H1 (cell line): ENCODE measurements at regions of chr12 and their contacts with region 1.

Region 1: GRCh38 chr12:124527861-124528561 is 39.4 kb downstream of the NCOR2 start:
- DNase-seq: no peak
- H3K4me3 ChIP-seq: no peak overlapping the region
- H3K27ac ChIP-seq: no peak overlapping the region
- H3K4me1 ChIP-seq: peaks cover 0 to 14% (median 6%) of the 10 kb centered on the region in 4 experiments
- H3K27me3 ChIP-seq: no peaks in the 10 kb centered on the region
- CTCF ChIP-seq: peak; percentile 28 to 65 (median 61); a peak in 3 of 4 replicates
- EP300 ChIP-seq: no peak
- POLR2A ChIP-seq: no peak
- RAD21 ChIP-seq: peak; percentile 37 to 52; a peak in 3 of 4 replicates

Region 2: DNA sequence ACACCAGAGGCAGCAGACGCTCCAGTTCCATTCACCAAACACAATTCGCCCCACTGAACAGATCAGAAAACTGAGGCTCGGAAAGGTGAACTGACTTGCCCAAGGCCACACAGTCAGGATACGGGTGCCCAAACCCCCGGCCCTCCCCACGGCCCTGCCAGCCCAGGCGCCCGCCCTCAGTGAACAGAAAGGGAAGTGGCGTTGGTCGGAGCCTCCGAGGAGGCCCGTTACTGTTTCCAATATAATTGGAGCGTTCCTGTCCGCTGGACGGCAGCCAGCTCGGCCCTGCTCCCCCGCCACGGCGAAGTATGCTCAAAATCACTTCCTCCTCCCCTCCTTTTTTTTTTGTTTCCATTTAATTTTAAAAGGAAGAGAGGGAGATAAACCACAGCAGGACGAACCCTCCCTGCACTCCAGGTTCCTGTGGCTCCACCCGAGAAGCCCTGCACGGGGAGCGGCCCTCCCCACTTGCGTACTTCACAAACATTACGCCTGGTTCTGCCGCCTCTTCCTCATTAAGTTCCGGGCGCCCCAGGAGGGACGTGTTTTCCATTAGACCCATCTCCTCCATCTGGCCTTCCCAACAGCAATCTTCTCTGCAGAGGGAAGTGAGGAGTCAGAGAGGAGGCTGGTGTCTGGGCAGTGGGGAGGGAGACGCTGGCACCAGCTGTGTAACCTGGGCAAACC is 21.7 kb before region 1 on chr12:
- CTCF ChIA-PET with region 1: interaction called, 39 read pairs
- POLR2A ChIA-PET with region 1: interaction called, 3 read pairs
- DNase-seq: no peak
- H3K4me3 ChIP-seq: no peak overlapping the region
- H3K27ac ChIP-seq: no peak overlapping the region
- H3K4me1 ChIP-seq: peaks cover 3 to 79% (median 55%) of the 10 kb centered on the region in 4 experiments
- H3K27me3 ChIP-seq: no peaks in the 10 kb centered on the region
- CTCF ChIP-seq: no peak
- EP300 ChIP-seq: no peak
- POLR2A ChIP-seq: no peak
- RAD21 ChIP-seq: no peak; a peak in 1 of 4 replicates

Region 3: GRCh38 chr12:124538194-124539082 is 10.4 kb after region 1 on chr12:
- CTCF ChIA-PET with region 1: interaction called, 17 read pairs
- POLR2A ChIA-PET with region 1: no interaction called
- DNase-seq: no peak
- H3K4me3 ChIP-seq: no peak overlapping the region
- H3K27ac ChIP-seq: no peak overlapping the region
- H3K4me1 ChIP-seq: peaks cover 0 to 30% (median 13%) of the 10 kb centered on the region in 4 experiments; a peak in 6 of 7 replicates
- H3K27me3 ChIP-seq: no peaks in the 10 kb centered on the region
- CTCF ChIP-seq: no peak
- EP300 ChIP-seq: no peak
- POLR2A ChIP-seq: no peak
- RAD21 ChIP-seq: no peak

Region 4: DNA sequence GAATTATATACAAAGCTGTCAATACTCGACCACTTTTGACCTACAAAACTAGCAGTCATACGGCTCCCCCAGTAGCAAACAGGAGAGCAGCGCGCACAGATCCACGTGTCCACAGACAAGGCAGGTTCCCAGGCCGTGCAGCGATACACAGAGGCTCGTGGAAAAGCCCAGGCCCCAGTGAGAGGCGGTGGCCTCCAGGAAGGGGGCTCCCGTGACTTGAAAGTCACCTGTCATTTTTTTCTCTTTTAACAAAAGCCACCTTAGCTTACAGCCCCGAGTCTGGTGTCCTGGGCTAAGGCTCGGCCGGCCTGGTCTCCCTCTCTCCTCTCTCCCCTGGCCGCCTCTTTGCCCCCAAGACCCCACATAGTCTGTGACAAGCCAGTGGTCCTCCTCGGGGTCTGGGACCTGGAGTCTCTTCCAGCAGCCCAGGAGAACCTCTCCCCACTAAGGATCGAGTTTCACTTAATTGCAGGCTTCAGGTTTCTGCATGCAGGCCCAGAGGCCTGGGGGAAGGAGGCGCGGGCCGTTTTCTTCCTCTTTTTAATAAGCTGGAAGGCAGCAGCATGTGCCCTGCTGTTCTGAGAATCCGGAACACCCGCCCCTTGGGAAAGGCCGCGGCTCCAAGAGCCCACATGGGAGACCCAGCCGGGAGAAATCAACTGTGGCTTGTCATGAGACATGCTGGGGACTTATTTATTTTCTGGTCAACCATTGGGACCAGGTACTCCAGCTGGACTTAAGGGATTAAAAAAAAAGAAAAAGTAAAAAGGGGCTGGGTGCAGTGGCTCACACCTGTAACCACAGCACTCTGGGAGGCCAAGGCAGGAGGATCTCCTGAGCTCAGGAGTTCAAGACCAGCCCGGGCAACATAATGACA is 23.5 kb after region 1 on chr12:
- CTCF ChIA-PET with region 1: interaction called, 11 read pairs
- POLR2A ChIA-PET with region 1: interaction called, 4 read pairs
- DNase-seq: no peak
- H3K4me3 ChIP-seq: peak overlapping the region in 1 of 4 experiments; percentile 16; a peak in 1 of 8 replicates
- H3K27ac ChIP-seq: no peak overlapping the region
- H3K4me1 ChIP-seq: peaks cover 7 to 38% (median 15%) of the 10 kb centered on the region in 4 experiments
- H3K27me3 ChIP-seq: no peaks in the 10 kb centered on the region
- CTCF ChIP-seq: no peak
- EP300 ChIP-seq: no peak
- POLR2A ChIP-seq: no peak
- RAD21 ChIP-seq: no peak; a peak in 1 of 4 replicates